ENCODE measurements at regions of chr16 and their contacts with region 1.

Region 1: DNA sequence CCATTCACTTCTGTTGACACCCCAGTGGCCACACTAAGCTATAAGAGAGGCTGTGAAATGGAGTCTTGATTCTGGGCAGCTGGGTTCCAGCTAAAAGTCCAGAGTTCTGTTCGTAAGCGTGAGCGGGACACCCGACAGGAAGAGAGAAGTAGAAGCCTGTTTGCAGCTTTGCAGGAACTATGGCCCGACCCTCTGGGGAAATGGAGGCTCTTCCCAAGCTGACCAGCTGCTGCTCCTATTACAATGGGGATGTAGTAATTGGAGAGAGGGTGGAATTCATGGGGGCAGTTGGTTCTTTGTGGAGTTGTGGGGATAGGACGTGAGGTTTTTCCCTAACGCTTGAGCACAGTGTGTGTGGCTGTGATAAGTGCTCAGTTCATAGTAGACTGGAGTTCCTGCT is 28.4 kb downstream of the UBALD1 start:
- DNase-seq: no peak
- H3K4me3 ChIP-seq: no peak overlapping the region
- CTCF ChIP-seq: no peak

Region 2: DNA sequence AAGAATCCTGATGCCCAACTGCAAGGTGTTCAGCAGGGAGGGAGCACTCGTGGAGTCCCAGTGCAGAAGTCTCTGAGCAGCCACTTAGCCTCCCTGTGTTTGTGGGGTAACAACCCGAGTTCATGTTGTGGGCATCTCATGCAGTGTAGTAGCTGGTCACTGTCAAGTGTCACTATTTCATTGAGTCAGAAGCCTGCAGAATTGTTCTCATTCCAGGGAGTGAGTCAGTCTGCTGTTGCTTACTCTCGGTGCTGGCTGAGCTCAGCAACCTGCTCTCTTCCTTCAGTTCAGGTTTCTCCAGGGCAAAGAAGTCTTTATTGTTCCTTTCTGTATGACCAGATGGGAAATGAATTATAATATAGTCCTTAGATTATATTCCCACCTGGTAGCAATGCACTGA is 86.0 kb before region 1 on chr16:
- CTCF ChIA-PET with region 1: interaction called, 69 read pairs
- POLR2A ChIA-PET with region 1: no interaction called
- DNase-seq: no peak
- H3K4me3 ChIP-seq: no peak overlapping the region
- CTCF ChIP-seq: no peak

Region 3: GRCh38 chr16:4511441-4512082 is 74.7 kb before region 1 on chr16:
- CTCF ChIA-PET with region 1: interaction called, 69 read pairs
- POLR2A ChIA-PET with region 1: no interaction called
- DNase-seq: no peak
- H3K4me3 ChIP-seq: no peak overlapping the region
- CTCF ChIP-seq: peak; percentile 76

Region 4: GRCh38 chr16:4550591-4550990 is 35.7 kb before region 1 on chr16:
- CTCF ChIA-PET with region 1: interaction called, 14 read pairs
- POLR2A ChIA-PET with region 1: no interaction called
- DNase-seq: no peak
- H3K4me3 ChIP-seq: no peak overlapping the region
- CTCF ChIP-seq: no peak

Region 5: DNA sequence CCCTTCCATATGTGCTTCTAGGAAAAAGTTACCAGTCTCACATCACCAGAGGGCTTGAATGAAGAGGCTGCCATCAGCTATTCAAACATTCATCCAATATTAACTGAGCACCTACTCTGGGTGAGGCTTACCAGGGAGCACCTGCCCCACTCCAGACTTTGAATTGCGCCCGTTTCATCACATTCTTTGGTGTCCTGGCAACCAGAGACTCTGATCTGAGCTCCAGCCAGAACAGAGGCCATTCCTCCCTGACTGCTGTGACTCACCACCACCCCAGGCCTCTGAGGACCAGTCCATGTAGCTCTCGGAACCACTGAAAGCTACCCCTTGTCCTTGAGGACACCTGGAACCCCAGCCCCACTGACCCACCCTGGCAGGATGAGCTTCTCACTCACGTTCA is 30.2 kb before region 1 on chr16 and contains the start of gene C16orf96:
- CTCF ChIA-PET with region 1: interaction called, 17 read pairs
- POLR2A ChIA-PET with region 1: no interaction called
- DNase-seq: no peak
- H3K4me3 ChIP-seq: no peak within 1 kb of the TSS
- CTCF ChIP-seq: no peak

Region 6: GRCh38 chr16:4561596-4561995 is 24.7 kb before region 1 on chr16:
- CTCF ChIA-PET with region 1: interaction called, 17 read pairs
- POLR2A ChIA-PET with region 1: no interaction called
- DNase-seq: no peak
- H3K4me3 ChIP-seq: no peak overlapping the region
- CTCF ChIP-seq: no peak

Region 7: GRCh38 chr16:4574919-4575705 is 11.2 kb before region 1 on chr16:
- CTCF ChIA-PET with region 1: interaction called, 14 read pairs
- POLR2A ChIA-PET with region 1: no interaction called
- DNase-seq: no peak
- H3K4me3 ChIP-seq: no peak overlapping the region
- CTCF ChIP-seq: no peak

Region 8: DNA sequence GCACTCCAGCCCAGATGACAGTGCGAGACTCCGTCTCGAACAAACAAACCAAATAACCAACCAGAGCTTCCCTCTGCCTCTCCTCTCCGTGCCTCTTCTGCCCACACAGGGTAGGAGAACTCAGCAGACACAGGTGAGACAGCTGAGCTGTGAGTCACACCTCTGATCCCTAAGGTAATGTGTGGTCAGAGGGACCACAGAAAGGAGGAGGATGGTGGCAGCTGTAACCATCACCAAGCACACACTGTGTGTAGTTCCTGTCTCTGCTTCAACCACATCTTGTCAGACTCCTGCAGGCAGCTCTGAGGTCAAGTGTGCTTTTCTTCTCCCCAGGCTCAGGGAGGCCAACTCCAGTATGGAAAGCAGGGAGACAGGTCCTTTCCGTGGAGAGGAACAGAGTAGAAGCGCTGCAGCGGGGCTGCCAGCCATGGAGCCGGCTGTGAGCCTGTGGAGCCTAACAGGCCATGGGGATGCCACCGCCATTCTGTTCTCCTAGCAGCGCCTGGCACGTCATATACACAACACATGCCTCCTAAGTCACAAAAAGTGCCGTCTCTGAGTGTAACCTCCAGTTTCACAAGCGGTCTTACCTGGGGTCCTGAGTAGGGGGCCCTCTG is 114.2 kb after region 1 on chr16:
- CTCF ChIA-PET with region 1: no interaction called
- POLR2A ChIA-PET with region 1: no interaction called
- DNase-seq: no peak
- H3K4me3 ChIP-seq: no peak overlapping the region
- CTCF ChIP-seq: no peak